ENCODE measurements at regions of chr16 and their contacts with region 1.

Region 1: DNA sequence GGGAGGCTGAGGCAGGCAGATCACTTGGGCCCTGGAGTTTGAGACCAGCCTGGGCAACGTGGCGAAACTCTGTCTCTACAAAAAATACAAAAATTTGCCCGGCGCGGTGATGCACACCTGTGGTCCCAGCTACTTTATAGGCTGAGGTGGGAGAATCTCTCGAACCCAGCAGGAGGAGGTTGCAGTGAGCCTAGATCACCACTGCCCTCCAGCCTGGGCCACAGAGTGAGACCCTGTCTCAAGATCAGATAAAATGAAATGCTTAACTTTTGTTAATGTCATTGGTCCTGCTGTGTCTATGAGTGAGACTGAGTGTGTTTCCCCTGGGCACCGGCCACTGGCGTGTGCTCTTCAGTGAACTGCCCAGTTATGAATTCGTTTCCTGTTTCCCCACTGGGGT is 10.5 kb downstream of the FAM234A start:
- DNase-seq: no peak
- H3K4me3 Mint-ChIP-seq: no peak overlapping the region
- H3K27ac Mint-ChIP-seq: no peak overlapping the region
- H3K4me1 Mint-ChIP-seq: no peaks in the 10 kb centered on the region
- H3K27me3 Mint-ChIP-seq: no peaks in the 10 kb centered on the region
- CTCF ChIP-seq: no peak

Region 2: DNA sequence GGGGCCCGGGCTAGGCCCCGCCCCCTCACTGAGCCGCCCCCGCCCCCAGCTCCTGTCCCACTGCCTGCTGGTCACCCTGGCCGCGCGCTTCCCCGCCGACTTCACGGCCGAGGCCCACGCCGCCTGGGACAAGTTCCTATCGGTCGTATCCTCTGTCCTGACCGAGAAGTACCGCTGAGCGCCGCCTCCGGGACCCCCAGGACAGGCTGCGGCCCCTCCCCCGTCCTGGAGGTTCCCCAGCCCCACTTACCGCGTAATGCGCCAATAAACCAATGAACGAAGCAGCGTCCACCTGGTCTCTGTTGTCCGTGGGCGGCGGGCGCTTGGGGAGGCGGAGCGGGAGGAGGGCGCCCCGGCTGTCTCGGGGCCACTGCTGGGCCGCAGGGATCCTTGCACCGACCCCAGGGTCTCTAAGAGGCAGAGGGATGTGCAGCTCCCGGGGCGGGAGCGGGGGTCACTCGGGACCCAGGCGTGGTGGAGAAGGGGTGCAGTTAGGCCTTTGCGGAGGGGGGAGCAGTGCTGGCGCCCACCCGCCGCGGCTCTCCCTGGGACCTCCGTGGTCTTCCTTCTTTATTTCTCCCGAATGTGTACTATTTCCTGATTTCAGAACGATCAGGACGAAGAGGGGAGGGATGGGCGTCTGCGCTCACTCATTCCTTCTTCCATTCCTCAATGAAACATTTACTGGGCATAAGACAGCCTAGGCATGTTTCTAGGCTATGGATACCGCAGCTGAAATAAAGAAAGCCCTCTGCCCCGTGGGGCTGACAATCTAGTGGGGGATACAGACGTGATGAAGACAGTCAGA is 90.7 kb before region 1 on chr16:
- CTCF ChIA-PET with region 1: no interaction called
- POLR2A ChIA-PET with region 1: no interaction called
- intact Hi-C with region 1: no loop called
- DNase-seq: no peak
- H3K4me3 Mint-ChIP-seq: peak overlapping the region; percentile 49
- H3K27ac Mint-ChIP-seq: no peak overlapping the region
- H3K4me1 Mint-ChIP-seq: peaks cover 13% of the 10 kb centered on the region
- H3K27me3 Mint-ChIP-seq: peaks cover 35% of the 10 kb centered on the region
- CTCF ChIP-seq: no peak

Region 3: DNA sequence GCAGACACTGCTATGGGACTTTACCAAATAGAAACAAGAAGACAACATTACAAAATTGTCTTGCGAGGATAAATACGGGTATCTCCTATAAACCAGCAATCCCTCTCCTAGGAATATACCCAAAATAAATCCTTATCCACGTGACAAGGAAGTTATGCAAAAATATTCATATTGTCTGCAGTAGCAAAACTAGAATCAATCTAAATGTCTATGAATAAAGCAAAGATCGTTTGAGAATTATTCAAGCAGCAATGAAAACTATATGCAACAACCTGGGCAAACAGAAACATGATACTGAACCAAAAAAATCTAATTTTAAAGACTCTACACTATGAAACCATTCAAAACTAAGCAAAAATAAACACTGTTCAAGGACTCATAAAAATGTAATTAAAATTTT is 25.1 kb before region 1 on chr16:
- CTCF ChIA-PET with region 1: no interaction called
- POLR2A ChIA-PET with region 1: no interaction called
- intact Hi-C with region 1: no loop called
- DNase-seq: no peak
- H3K4me3 Mint-ChIP-seq: no peak overlapping the region
- H3K27ac Mint-ChIP-seq: no peak overlapping the region
- H3K4me1 Mint-ChIP-seq: no peaks in the 10 kb centered on the region
- H3K27me3 Mint-ChIP-seq: no peaks in the 10 kb centered on the region
- CTCF ChIP-seq: no peak

Region 4: DNA sequence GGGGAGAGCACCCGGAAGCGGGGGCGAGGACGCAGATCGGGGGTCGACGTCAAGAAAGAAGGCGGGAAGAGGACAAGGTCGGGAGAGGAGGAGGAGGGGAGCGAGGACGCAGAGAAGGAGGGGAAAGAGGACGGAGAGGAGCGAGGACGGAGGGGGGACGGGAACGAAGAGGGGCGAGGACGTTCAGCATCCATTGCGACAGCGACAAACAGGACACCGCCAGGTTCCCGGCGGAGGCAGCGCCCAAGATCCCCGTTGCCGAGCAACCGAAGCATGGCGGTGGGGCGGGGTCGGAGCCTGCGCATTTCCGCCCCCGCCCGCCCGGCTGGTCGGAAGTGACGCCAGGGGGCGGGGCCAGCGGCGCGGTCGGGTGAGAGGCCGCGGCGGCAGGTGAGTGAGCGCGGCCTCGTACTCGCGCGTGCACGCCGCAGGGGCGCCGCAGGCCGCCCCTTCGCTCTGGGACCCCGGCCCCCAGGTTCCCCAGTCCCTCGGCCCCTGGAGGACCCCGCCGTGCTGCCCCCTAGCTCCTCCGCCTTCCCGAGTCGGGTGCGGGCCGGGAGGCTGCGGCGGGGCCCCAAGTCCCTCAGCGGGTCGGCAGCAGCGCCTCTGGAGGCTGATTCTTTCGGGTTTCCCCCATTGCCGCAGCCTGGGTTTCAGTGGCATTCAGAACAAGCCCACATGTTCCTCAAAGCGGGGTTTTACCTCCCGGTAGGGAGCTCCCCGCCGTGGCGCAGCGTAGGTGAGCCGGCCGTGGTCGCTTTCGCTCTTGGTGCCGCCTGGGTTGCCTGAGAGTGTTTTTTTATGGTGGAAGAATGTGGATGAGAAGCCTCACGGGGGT is 10.4 kb before region 1 on chr16 and contains the start of gene FAM234A:
- CTCF ChIA-PET with region 1: interaction called, 4 read pairs
- POLR2A ChIA-PET with region 1: interaction called, 10 read pairs
- intact Hi-C with region 1: no loop called
- DNase-seq: peak; percentile 91
- H3K4me3 Mint-ChIP-seq: peak within 1 kb of the TSS; percentile 98
- H3K27ac Mint-ChIP-seq: peak within 1 kb of the TSS; percentile 98
- H3K4me1 Mint-ChIP-seq: no peaks in the 10 kb centered on the region
- H3K27me3 Mint-ChIP-seq: no peaks in the 10 kb centered on the region
- CTCF ChIP-seq: peak; percentile 37
- total RNA-seq, gene FAM234A: 61.2 and 67.3 TPM in 2 replicates

Measured in MCF 10A (cell line).